ENCODE measurements at regions of chr2 and their contacts with region 1.

Region 1: DNA sequence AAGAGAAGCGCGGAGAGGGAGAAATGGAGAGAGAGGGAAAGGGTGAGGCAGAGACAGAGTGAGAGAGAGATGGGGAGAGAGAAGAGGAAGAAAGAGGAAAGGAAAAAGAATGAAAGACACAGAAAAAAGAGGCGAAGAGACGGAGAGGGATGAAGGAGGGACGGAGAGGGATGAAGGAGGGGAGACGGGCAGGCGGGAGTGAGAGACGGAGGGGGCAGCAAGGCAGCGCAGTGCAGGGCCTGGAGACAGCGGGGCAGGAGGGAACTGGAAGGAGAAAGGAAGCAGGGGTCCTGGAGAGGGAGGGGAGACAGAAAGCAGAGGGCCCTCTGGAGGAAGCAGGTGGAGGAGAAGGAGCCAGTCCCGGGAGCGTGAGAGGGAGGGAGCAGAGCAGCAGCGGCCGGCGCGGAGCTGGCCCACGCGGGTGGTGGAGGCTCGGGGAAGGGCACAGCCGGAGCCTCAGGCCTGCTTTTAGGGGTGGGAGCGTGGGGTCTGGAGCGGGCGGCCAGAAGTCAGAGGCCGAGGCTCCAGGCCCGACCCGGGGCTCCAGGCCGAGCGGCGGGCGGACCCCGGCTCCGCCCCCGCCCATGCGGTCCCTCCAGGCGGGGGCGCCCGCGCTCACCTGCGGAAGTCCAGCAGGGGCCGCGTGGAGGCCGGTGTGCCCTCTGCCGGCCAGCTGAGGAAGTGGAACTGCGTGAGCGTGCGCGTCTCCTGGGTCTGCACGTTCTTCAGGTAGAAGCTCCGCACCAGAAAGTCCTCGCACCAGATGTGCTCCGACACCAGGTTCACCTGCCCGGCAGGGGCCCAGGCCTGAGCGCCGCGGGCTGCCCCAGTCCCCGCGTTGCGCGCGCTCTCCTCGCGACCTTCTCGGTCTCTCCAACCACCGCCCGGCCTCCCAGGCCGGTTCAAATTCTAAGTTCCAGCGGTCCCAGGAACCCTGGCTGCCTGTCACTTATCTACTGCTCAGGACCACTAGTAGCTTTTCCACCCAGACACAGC is 14.5 kb downstream of the PTPRN start:
- DNase-seq: peak; percentile 56 to 92 (median 84)

Region 2: DNA sequence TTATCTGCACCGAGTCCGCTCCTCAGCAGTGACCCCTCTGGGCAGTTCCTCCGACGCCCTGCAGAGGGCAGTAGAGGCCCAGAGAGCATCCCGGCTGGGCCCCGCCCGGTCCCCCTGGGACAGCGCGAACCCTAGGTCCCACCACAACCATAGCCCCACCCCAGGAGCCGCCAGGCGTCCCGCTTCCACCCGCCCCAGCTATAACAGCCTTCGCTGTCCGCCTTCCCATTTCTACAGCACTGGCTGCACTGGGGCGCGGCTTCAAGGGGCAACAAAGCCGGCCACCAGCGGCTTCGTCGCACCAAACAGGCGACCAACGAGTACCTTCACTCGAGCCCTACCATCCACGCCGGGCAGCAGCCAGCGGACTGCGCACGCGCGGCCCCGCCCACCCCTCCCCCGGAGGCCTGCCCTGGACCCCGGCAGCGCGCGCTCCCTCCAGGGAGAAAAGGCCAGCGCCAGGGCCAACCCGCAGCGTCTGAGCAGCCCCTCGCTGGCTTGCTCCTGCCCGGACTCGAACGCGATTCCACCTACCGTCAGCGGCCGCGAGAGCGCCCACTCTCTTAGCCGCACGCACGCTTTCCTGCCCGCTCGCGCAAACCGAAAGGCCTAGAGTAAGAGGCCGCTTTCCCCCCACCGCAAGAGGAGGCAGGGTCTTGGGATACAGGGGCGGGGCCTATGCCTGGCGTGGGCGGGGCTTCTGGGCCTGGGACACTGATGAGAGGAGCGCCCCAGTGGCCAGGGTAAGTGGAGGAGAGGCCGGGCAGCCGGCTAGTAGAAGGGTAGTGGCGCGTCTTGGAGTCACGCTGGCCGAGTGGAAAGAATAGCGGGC is 134.3 kb before region 1 on chr2 and contains the start of gene NHEJ1:
- intact Hi-C with region 1: loop called (anchors 5 kb)
- DNase-seq: peak; percentile 93 to 98 (median 96)

Region 3: DNA sequence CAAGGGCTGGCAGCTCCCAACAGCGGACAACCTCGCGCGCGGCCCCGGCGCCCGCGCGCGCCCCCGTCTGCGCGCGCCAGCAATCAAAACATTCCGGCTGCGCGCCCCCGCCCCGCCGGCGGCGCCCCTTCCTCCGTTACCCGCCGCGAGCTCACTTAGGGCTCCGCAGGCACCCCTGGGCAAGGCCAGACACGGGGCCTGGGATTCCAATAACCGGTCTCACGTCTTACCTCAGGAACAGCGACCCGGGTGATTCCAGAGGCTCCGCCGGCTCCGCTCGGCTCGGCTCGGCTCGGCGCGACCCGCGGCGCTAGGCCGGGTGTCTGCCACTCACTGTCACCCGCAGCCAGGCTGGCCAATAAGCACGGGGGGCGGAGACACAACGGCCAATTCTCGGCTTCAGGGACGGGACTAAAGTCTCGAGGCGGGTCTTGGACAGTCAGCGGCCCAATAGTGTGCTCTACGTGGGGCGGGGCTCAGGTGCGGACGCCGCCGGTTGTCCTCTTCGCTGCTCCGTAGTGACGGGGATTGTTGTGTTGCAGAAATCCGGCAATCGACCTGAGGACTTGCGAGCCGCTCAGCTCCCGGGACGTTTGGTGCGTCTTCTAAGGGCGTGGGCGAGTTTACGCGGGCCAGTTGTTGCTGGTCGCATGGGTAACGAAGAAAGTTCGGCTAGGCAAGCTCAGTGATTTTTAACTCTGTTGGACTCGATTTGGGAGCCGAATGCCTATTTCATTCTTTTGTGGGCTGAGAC is 65.2 kb before region 1 on chr2 and contains the starts of genes ANKZF1 and ATG9A:
- intact Hi-C with region 1: loop called (anchors 5 kb)
- DNase-seq: peak; percentile 96 to 100 (median 99)

Region 4: GRCh38 chr2:219278655-219279516 is 15.8 kb before region 1 on chr2 and contains the start of gene DNAJB2:
- intact Hi-C with region 1: loop called (anchors 2 kb)
- DNase-seq: peak; percentile 98 to 100 (median 99)